SK-N-SH (cell line): ENCODE measurements at regions of chr15 and their contacts with region 1.

Region 1: DNA sequence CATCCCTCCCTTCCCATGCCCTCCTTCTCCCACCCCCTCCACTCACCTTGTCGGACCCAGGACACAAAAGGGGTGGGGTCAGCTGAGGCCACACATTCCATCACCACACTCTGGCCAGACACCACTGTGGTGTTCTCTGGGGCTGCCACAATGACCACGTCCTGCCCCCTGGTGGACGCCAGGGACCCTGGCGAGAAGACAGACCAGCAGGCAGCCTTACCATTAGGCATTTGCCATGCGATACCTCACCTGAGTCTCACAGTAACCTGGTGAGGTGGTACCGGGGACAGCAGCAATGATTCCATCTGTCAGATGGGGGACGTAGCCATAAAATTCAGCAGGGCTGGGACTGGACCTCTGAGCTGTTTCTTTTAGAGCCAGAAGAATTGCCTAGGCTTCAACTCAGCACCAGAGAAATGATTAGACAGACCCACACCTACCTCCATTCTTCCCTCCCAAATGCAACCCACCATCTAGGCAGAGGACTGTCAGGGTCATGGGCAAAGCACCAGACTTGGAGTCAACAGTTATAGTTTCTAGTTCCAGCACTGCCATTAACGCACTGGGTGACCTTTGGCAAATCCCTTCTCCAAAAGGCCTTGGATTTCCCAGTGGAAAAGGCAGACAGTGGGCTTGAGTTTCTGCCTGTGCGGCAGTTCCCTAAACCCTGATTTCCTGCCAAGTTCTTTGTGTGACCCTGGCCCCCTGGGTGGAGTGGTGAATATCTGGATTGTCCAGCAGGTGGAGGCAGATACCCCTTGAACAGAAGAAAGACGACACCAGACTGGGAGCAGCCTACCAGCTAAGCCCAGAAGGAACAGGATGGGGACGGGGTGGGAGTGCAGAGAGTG is 21.8 kb downstream of the IGDCC4 start:
- DNase-seq: peak; percentile 91
- H3K4me3 ChIP-seq: no peak overlapping the region; a peak in 1 of 4 replicates
- H3K27ac ChIP-seq: no peak overlapping the region
- H3K4me1 ChIP-seq: peaks cover 0 to 8% of the 10 kb centered on the region in 2 experiments; a peak in 1 of 4 replicates
- H3K27me3 ChIP-seq: peaks cover 11% of the 10 kb centered on the region
- CTCF ChIP-seq: peak; percentile 75
- EP300 ChIP-seq: no peak
- RAD21 ChIP-seq: peak; percentile 80

Region 2: GRCh38 chr15:65134538-65134937 is 266.4 kb before region 1 on chr15:
- CTCF ChIA-PET with region 1: no interaction called
- POLR2A ChIA-PET with region 1: no interaction called
- DNase-seq: peak; percentile 24
- H3K4me3 ChIP-seq: peak overlapping the region; percentile 73 to 80
- H3K27ac ChIP-seq: no peak overlapping the region
- H3K4me1 ChIP-seq: peaks cover 0 to 6% of the 10 kb centered on the region in 2 experiments; a peak in 1 of 4 replicates
- H3K27me3 ChIP-seq: no peaks in the 10 kb centered on the region
- CTCF ChIP-seq: no peak
- EP300 ChIP-seq: no peak
- RAD21 ChIP-seq: no peak

Region 3: GRCh38 chr15:65361708-65362459 is 39.1 kb before region 1 on chr15:
- CTCF ChIA-PET with region 1: interaction called, 14 read pairs
- POLR2A ChIA-PET with region 1: no interaction called
- DNase-seq: no peak
- H3K4me3 ChIP-seq: no peak overlapping the region
- H3K27ac ChIP-seq: no peak overlapping the region
- H3K4me1 ChIP-seq: peaks cover 0 to 7% of the 10 kb centered on the region in 2 experiments; a peak in 1 of 4 replicates
- H3K27me3 ChIP-seq: no peaks in the 10 kb centered on the region
- CTCF ChIP-seq: no peak
- EP300 ChIP-seq: no peak
- RAD21 ChIP-seq: no peak

Region 4: DNA sequence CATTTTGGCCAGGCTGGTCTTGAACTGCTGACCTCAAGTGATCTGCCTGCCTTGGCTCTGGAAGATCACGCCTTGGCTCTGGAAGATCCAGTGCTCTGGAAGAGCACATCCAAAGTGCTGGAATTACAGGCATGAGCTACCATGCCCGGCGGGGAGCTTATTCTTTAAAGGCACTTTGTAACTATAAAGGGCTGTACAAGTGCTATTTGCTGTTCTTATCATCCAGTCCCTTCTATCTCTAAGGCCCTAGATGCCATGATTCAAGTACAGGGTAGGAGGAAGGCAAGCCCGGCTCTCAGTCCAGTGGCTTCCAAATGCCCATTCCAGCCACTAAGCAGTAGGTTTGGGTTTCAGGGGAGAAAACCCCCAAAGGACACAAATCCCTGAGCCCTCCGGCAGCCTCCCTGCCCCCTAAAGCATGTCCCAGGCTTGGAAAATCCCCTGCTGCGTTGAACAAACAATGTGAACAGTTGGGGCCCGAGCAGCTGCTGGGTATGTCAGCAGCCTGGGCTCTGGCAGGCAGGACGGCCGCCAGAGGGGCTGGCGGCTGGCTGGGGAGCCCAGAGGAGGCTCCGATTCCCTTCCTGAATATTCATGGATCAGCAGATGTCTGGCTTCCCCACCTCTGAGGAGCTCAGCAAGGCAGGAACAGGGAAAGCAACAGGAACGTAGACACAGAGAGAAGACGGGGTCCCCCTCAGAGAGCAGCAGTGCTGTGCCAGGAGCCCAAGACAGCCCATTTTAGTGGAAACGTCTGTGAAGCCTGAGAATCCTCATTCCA is 14.0 kb after region 1 on chr15:
- CTCF ChIA-PET with region 1: interaction called, 71 read pairs
- POLR2A ChIA-PET with region 1: no interaction called
- DNase-seq: no peak
- H3K4me3 ChIP-seq: no peak overlapping the region
- H3K27ac ChIP-seq: no peak overlapping the region
- H3K4me1 ChIP-seq: peaks cover 4% of the 10 kb centered on the region in 2 experiments; a peak in 2 of 4 replicates
- H3K27me3 ChIP-seq: no peaks in the 10 kb centered on the region
- CTCF ChIP-seq: no peak
- EP300 ChIP-seq: no peak
- RAD21 ChIP-seq: no peak

Region 5: GRCh38 chr15:65421360-65422070 is 20.5 kb after region 1 on chr15:
- CTCF ChIA-PET with region 1: interaction called, 71 read pairs
- POLR2A ChIA-PET with region 1: no interaction called
- DNase-seq: peak; percentile 62
- H3K4me3 ChIP-seq: peak overlapping the region; percentile 55 to 75; a peak in 3 of 4 replicates
- H3K27ac ChIP-seq: no peak overlapping the region
- H3K4me1 ChIP-seq: peaks cover 9 to 17% of the 10 kb centered on the region in 2 experiments; a peak in 3 of 4 replicates
- H3K27me3 ChIP-seq: no peaks in the 10 kb centered on the region
- CTCF ChIP-seq: no peak
- EP300 ChIP-seq: no peak
- RAD21 ChIP-seq: no peak

Region 6: DNA sequence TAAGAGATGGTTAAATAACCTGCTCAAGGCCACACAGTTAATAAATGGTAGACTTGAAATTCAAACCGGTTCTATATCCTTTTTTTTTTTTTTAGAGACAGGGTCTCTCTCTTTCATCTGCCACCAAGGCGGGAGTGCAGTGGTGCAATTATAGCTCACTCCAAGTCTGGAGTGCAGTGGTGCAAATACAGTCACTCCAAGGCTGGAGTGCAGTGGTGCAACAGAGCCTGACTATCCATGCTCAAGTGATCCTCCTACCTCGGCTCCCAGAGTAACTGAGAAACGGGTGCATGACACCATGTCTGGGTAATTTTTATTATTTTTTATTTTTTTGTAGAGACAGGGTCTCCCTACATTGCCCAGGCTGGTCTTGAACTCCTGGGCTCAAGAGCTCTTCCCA is 93.1 kb after region 1 on chr15:
- CTCF ChIA-PET with region 1: interaction called, 12 read pairs
- POLR2A ChIA-PET with region 1: no interaction called
- DNase-seq: no peak
- H3K4me3 ChIP-seq: no peak overlapping the region
- H3K27ac ChIP-seq: no peak overlapping the region
- H3K4me1 ChIP-seq: no peaks in the 10 kb centered on the region
- H3K27me3 ChIP-seq: no peaks in the 10 kb centered on the region
- CTCF ChIP-seq: no peak
- EP300 ChIP-seq: no peak
- RAD21 ChIP-seq: no peak